ENCODE measurements at regions of chr2 and their contacts with region 1.

Region 1: DNA sequence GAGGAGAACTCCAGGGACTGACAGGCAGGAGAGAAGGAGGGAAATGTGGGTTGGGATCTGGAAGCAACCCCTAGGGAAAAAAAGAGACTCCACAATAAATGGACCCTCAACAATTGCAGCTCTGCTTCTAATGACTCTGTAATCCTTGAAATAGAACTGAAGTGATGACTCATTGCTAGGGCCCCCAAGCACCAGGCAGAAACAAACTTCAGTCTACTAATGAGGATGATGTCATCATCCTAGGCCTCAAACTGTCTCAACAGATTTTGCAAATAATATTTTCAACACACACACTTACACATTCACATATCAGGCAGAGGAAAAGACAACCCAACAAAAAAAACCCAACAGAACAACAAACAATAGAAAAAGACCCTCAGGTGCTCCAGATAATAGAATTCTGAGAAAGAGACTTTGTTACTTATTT is 143.3 kb downstream of the HDAC4 start:
- DNase-seq: no peak
- ATAC-seq: peak; percentile 46
- H3K4me3 Mint-ChIP-seq: peak overlapping the region; percentile 32
- H3K27ac Mint-ChIP-seq: peak overlapping the region; percentile 88
- H3K4me1 Mint-ChIP-seq: peaks cover 91% of the 10 kb centered on the region
- H3K27me3 Mint-ChIP-seq: no peaks in the 10 kb centered on the region

Region 2: DNA sequence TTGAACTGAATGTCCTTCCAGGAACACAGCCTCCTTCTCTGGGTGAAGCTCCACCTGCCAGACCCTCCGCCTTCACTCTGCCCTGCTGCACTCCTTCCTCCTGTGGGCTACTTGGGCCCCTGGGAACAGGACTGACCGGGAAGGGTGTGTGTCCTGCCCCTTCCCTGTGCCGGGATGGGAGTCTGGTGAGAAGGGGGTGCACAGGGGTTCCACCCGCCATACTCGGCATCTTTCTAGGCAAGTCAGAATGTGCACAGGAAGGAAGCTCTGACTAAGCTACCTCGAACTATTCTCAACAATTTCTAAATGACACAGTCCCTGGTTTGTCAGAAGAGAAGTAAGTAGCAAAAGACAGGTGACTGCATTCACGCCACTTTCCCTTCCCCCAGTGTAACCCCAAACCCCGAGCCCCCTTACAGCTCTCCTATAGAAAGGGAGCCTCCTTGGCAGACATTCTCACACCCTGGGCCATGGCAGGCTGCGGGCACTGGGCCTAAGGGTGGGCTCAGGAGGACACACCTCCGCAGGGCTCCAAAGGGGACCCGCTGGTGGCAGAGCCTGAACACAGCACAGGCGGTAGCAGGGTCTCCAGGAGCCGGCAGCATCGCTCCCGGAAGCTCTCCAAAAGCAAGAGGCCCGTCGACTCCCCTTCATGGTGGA is 40.8 kb before region 1 on chr2:
- CTCF ChIA-PET with region 1: interaction called, 3 read pairs
- POLR2A ChIA-PET with region 1: no interaction called
- intact Hi-C with region 1: loop called in 1 of 2 experiments (anchors 1 kb)
- DNase-seq: peak; percentile 71
- ATAC-seq: peak; percentile 97
- H3K4me3 Mint-ChIP-seq: peak overlapping the region; percentile 66
- H3K27ac Mint-ChIP-seq: peak overlapping the region; percentile 95
- H3K4me1 Mint-ChIP-seq: peaks cover 73% of the 10 kb centered on the region
- H3K27me3 Mint-ChIP-seq: no peaks in the 10 kb centered on the region

Region 3: DNA sequence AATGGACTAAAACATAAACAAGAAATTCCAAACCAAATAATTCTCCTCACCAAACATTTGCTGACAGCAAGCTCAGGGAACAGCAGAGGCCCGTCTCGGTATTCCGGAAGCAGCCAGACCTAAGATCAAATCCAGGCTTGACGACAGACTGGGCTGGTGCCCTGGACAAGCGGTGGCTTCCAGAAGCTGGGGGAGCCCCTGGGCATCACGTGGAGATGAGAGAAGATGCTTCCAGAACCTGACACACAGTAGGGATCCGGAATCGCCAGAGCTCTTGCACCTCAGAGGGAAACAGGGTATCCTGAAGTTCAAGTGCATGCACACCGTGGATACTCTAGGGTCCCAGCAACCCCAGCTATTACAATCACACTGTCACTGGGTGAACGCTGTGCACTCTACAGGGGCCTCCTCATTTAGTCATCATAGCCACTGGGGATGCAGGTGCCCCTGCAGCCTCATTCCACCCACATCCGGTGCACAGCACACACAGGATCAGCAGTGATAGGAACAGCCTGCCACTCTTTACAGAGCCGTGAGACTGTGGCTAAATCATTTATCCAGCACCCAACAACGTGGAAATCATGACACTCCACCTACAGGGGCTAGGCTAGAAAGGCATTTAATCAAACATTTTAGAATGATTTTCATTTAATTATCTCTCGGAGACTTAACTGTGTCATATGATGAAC is 40.7 kb after region 1 on chr2:
- CTCF ChIA-PET with region 1: no interaction called
- POLR2A ChIA-PET with region 1: interaction called, 3 read pairs
- intact Hi-C with region 1: loop called in 1 of 2 experiments (anchors 5 kb)
- DNase-seq: peak; percentile 86
- ATAC-seq: peak; percentile 91
- H3K4me3 Mint-ChIP-seq: peak overlapping the region; percentile 63
- H3K27ac Mint-ChIP-seq: peak overlapping the region; percentile 75
- H3K4me1 Mint-ChIP-seq: peaks cover 71% of the 10 kb centered on the region
- H3K27me3 Mint-ChIP-seq: peaks cover 8% of the 10 kb centered on the region

Region 4: DNA sequence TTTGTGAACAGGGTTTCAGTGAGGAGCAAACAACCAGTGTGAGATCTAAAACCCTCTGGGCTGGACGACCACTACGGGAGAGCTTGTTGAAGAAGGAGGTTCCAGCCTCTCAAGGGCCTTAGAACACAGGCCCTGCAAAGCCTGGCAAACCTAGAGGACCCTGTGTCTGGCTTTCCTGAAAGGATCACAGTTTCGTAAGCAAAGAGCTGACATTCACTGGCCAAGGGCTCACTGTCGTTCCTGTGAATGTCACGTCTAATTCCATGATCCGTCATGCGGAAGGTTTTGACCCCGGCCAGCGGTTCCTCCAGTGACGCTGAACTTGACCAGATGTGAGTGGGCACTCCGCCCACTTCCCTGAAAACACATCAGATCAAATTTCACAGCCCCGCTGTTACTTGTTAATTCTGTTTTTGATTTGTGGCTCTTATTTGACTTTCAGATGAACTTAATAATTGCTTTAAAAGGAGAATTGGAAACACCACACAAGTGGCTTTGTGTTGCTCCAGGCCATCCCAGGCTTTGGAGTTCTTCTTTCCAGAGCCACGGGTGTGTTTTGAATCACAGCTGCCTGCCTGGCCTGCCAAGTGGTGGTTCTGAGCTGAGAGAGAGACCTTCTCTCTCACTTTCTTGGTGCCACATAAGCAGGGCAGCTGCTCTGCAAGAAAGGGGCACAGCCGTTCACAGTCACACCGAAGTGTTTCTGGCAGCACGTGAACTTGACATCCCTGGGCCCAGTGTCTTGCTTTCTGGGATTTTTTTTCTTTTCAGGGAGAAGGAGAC is 459.2 kb after region 1 on chr2:
- CTCF ChIA-PET with region 1: no interaction called
- POLR2A ChIA-PET with region 1: no interaction called
- intact Hi-C with region 1: no loop called
- DNase-seq: no peak
- ATAC-seq: no peak
- H3K4me3 Mint-ChIP-seq: no peak overlapping the region
- H3K27ac Mint-ChIP-seq: no peak overlapping the region
- H3K4me1 Mint-ChIP-seq: no peaks in the 10 kb centered on the region
- H3K27me3 Mint-ChIP-seq: peaks cover under 1% of the 10 kb centered on the region

Measured in activated CD4-positive, alpha-beta T cell treated with anti-CD3 and anti-CD28 coated beads for 36 hours (primary cell).